ENCODE measurements at regions of chr6 and their contacts with region 1.

Region 1: DNA sequence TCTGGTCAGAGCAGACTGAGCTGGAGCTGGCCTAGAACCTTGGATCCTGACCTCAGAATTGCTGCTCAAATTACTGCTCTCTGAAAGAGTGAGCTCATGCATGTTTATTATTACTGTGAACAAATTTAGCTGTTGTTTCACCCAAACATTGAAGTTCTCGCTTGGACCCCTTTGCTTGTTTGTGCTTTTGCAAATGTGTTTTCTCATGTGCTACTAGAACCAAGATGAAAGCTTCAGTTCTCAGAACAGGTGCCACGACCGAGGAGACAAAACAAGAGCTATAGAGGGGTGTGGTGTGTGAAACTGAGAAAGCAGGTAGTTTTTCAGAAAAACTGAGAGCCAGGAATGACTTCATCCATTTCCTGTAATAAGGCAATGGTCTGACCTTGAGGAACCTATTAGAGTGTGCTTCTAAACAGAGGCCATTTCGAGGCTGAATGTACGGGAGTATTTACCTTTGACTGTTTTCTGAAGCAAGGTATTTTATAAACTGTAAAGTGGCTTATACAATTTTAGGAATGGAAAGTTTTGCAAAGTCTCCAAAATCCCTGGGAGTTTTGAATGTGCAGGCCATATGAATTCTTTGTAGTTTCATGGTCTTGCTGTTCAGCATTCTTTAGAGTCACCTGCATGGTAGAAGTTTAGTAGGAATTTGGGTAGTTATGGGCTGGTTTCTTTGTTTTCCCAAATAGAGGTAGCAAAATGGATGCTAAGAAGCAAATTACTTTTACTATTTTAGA is 49.8 kb upstream of the ESR1 start:
- DNase-seq: peak; percentile 84
- H3K4me3 Mint-ChIP-seq: peak overlapping the region; percentile 67
- H3K27ac Mint-ChIP-seq: peak overlapping the region; percentile 94
- H3K4me1 Mint-ChIP-seq: peaks cover 36% of the 10 kb centered on the region
- H3K27me3 Mint-ChIP-seq: no peaks in the 10 kb centered on the region

Region 2: DNA sequence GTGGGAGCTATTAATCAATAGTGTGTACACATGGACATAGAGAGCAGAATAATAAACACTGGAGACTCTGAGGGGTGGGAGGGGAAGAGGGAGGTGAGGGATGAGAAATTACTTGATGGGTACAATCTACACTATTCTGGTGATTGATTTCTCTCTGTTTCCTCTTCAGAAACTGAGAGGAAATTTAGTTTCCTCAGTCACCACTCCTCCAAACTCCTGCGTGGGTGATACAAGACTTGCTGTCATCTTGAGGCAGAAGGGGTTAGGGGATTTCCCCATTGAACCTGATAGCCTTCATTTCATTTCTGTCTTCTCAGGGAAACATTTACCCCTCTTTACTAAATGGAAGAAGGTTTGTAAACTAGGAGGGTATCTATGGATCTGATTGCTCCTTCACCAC is 34.5 kb before region 1 on chr6:
- intact Hi-C with region 1: loop called (anchors 1 kb)
- DNase-seq: peak; percentile 79
- H3K4me3 Mint-ChIP-seq: peak overlapping the region; percentile 29
- H3K27ac Mint-ChIP-seq: peak overlapping the region; percentile 64
- H3K4me1 Mint-ChIP-seq: peaks cover 26% of the 10 kb centered on the region
- H3K27me3 Mint-ChIP-seq: peaks cover 11% of the 10 kb centered on the region

Region 3: GRCh38 chr6:152184917-152185574 is 427.4 kb after region 1 on chr6:
- intact Hi-C with region 1: loop called (anchors 2 kb)
- DNase-seq: peak; percentile 74
- H3K4me3 Mint-ChIP-seq: peak overlapping the region; percentile 86
- H3K27ac Mint-ChIP-seq: peak overlapping the region; percentile 96
- H3K4me1 Mint-ChIP-seq: peaks cover 53% of the 10 kb centered on the region
- H3K27me3 Mint-ChIP-seq: no peaks in the 10 kb centered on the region

Measured in activated CD4-positive, alpha-beta T cell treated with anti-CD3 and anti-CD28 coated beads, Interleukin-2, amount 10 ng/mL, durations not matched to agents 24 days and 14 days (primary cell).